ENCODE measurements at regions of chr6 and their contacts with region 1.

Region 1: GRCh38 chr6:44246663-44247337 is at the start of gene HSP90AB1:
- DNase-seq: peak; percentile 94 to 97
- H3K4me3 ChIP-seq: peak within 1 kb of the TSS; percentile 55 to 100 (median 98)
- H3K27ac ChIP-seq: peak within 1 kb of the TSS; percentile 95
- H3K4me1 ChIP-seq: peaks cover 7 to 18% (median 14%) of the 10 kb centered on the region in 4 experiments
- H3K27me3 ChIP-seq: no peaks in the 10 kb centered on the region
- CTCF ChIP-seq: no peak
- EP300 ChIP-seq: no peak
- POLR2A ChIP-seq: peak; percentile 99 to 100
- RAD21 ChIP-seq: no peak
- total RNA-seq, gene HSP90AB1: 2,224 and 2,297 TPM in 2 replicates

Region 2: GRCh38 chr6:44058617-44059358 is 188.0 kb before region 1 on chr6:
- CTCF ChIA-PET with region 1: no interaction called
- POLR2A ChIA-PET with region 1: no interaction called
- DNase-seq: no peak
- H3K4me3 ChIP-seq: no peak overlapping the region
- H3K27ac ChIP-seq: no peak overlapping the region
- H3K4me1 ChIP-seq: peaks cover 0 to 4% (median 0%) of the 10 kb centered on the region in 4 experiments; a peak in 4 of 7 replicates
- H3K27me3 ChIP-seq: no peaks in the 10 kb centered on the region
- CTCF ChIP-seq: no peak
- EP300 ChIP-seq: no peak
- POLR2A ChIP-seq: no peak
- RAD21 ChIP-seq: no peak

Region 3: DNA sequence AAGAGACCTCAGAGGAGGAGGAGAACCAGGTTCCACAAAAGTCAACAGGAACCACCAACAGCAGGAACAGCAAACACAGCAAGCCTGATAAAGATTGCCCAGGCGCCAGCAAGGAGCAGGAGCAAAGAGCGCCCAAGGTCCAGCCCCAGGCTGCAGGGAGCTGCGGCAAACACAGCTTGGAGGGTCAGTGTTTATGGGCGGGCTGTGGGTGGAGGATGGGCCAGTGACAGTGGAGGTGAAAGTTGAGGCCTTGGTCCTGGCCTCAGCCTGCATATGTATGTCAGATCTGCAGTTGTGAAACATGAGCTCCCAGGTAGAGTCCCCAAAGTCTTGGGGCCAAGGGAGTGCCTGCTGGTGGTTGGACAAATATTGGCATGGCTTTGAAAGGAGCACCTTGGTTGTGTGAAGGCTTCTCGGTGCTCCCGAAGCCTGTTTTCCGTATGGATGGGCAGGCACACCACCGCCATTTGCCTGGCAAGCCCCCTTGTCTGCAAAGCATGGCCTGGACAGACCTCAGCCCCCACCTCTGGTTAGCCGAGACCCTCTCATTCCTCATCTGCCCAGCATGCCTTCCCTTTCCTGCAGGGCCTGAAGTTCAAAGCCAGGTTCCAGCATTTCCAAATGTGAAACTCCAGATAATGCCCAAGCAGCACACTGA is 90.2 kb before region 1 on chr6:
- CTCF ChIA-PET with region 1: interaction called, 4 read pairs
- POLR2A ChIA-PET with region 1: interaction called, 55 read pairs
- DNase-seq: no peak
- H3K4me3 ChIP-seq: no peak overlapping the region
- H3K27ac ChIP-seq: no peak overlapping the region
- H3K4me1 ChIP-seq: peaks cover 0 to 12% (median 4%) of the 10 kb centered on the region in 4 experiments; a peak in 5 of 7 replicates
- H3K27me3 ChIP-seq: no peaks in the 10 kb centered on the region
- CTCF ChIP-seq: no peak
- EP300 ChIP-seq: no peak
- POLR2A ChIP-seq: no peak
- RAD21 ChIP-seq: no peak

Region 4: DNA sequence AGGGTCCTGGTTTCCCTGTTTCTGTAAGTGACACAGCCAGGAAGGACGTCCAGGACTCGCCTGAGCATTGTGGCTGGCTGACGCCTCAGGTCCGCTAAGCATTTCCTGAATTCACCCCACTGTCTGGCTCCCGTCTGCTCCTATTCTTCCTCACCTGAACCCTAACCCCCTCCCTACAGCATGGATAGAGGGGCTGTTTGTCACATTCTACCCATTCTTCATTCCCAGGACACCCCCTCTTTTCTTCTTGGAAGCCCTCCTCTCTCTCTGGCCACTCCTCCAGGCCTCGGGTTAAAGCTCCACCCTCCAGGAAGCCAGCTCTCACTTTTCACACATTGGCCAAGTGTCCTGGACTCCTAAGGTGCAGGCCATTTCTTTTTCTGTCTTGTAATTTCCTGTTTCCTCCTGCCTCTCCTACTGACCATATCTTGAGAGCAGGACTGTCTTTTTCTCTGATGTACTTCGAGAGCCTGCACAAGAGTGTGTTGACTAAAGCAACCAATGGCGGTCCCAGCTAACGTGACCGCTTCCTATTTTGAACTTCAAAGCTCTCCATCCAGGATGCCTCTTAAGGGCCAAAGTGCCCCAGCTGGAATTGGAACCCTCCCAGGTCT is 54.3 kb before region 1 on chr6:
- CTCF ChIA-PET with region 1: interaction called, 6 read pairs
- POLR2A ChIA-PET with region 1: interaction called, 26 read pairs
- DNase-seq: no peak
- H3K4me3 ChIP-seq: no peak overlapping the region
- H3K27ac ChIP-seq: no peak overlapping the region
- H3K4me1 ChIP-seq: peaks cover 4 to 8% (median 4%) of the 10 kb centered on the region in 4 experiments; a peak in 6 of 7 replicates
- H3K27me3 ChIP-seq: no peaks in the 10 kb centered on the region; a peak in 1 of 7 replicates
- CTCF ChIP-seq: no peak
- EP300 ChIP-seq: no peak
- POLR2A ChIP-seq: no peak
- RAD21 ChIP-seq: no peak

Region 5: DNA sequence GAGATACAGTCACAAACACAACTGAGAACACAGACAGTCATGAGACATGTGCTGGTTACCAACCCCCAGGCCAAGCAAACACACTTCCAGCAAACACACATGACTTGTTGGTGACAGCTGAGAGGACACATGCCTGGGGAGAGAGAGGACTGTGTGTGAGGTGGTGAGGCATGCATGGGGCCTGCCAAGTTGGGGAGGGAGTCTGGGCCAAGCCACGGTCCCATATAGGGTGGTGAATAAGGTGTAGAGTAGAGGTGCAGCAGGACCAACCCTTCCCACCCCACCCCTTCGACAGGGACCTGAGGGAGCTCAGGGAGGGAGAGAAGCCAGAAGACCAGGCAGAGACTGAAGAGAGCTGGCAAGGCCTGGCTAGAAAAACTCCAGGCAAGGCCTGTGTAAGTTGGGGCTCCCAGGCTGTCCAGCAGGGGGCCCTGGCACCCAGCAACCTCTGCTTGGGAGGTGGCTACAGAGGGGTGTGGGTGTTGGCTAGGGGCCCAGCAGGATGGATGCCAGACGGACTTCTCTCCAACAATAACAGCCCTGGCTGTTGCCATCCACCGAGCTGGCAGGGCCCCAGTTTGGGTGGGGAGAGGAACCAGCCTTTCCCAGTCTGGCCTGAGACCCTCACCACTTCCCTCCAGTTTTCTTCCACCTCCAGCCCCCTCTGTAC is 25.4 kb before region 1 on chr6:
- CTCF ChIA-PET with region 1: interaction called, 40 read pairs
- POLR2A ChIA-PET with region 1: interaction called, 477 read pairs
- DNase-seq: peak in 1 of 2 experiments; percentile 74
- H3K4me3 ChIP-seq: no peak overlapping the region; a peak in 1 of 8 replicates
- H3K27ac ChIP-seq: no peak overlapping the region
- H3K4me1 ChIP-seq: peaks cover 33 to 61% (median 45%) of the 10 kb centered on the region in 4 experiments
- H3K27me3 ChIP-seq: no peaks in the 10 kb centered on the region
- CTCF ChIP-seq: peak in 2 of 3 experiments; percentile 67 to 71; a peak in 3 of 4 replicates
- EP300 ChIP-seq: no peak
- POLR2A ChIP-seq: no peak
- RAD21 ChIP-seq: peak; percentile 28 to 60

Region 6: DNA sequence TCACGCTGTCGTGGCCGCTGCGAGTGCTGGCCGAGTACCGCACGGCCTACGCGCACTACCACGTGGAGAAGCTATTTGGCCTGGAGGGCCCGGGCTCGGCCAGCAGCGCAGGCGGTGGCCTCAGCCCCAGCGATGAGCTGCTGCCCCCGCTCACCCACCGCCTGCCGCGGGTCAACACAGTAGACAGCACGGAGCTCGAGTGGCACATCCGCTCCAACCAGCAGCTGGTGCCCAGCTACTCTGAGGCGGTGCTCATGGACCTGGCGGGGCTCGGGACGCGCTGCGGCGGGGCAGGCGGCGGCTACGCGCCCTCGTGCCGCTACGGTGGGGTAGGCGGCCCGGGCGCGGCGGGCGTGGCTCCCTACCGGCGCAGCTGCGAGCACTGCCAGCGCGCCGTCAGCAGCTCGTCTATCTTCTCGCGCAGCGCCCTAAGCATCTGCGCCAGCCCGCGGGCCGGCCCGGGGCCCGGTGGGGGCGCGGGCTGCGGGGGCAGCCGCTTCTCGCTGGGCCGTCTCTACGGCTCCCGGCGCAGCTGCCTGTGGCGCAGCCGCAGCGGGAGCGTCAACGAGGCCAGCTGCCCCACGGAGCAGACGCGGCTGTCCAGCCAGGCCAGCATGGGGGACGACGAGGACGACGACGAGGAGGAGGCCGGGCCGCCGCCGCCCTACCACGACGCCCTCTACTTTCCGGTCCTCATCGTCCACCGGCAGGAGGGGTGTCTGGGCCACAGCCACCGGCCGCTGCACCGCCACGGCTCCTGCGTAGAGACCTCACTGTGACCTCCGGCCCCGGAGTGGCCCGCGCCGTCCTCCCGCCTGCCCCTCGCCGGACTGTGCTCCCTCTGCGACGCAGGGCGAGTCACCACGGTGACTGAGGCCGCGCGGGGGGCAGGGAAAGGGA is 29.2 kb after region 1 on chr6:
- CTCF ChIA-PET with region 1: no interaction called
- POLR2A ChIA-PET with region 1: interaction called, 138 read pairs
- DNase-seq: no peak
- H3K4me3 ChIP-seq: no peak overlapping the region
- H3K27ac ChIP-seq: no peak overlapping the region
- H3K4me1 ChIP-seq: peaks cover 5 to 16% (median 9%) of the 10 kb centered on the region in 4 experiments
- H3K27me3 ChIP-seq: peaks cover 0 to 3% (median 0%) of the 10 kb centered on the region in 4 experiments; a peak in 1 of 7 replicates
- CTCF ChIP-seq: no peak
- EP300 ChIP-seq: no peak
- POLR2A ChIP-seq: no peak
- RAD21 ChIP-seq: no peak

Region 7: DNA sequence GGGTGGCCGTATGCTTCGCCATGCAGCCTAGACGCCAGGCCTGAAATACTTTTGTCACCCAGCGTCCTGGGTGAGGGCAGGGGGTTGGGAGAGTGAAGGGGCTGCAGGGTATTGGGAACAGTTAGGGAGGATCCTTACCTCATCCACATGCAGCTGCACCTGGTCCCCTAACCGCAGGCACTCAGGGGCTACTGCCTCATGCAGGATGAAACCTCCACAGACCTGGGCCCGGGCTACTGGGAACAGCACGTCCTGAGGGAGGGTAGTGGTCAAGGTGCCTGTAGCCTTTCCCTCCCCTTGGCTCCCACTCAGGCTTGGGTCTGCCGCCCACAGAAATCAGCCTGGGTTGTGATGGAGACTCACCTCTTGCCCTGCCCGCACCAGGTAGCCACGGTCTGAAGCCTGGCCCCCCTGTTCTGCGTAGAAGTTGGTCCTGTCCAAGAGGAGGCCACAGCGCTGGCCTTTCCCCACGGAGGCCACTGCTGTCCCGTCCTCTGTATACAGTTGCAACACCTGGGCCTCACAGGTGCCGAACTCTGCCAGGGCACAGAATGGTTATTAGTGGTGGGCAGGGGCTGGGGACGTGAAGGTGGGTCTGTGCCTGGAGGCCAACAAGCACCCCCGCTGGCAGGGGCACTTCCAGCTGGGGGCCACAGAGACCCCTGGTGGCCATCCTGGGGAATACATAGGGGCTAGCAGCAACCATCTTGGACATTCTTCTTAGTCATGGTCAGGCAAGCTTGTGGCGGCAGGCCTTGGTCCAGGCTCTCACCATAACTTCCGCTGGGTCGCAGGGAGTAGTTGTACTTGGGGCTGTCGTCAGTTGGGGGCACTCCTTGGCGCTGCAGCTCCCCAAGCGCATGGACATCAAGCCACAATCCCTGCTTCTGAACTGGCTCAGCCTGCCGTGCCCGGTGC is 57.7 kb after region 1 on chr6:
- CTCF ChIA-PET with region 1: interaction called, 5 read pairs
- POLR2A ChIA-PET with region 1: interaction called, 19 read pairs
- DNase-seq: peak in 1 of 2 experiments; percentile 80
- H3K4me3 ChIP-seq: no peak overlapping the region
- H3K27ac ChIP-seq: no peak overlapping the region
- H3K4me1 ChIP-seq: peaks cover 0 to 4% (median 0%) of the 10 kb centered on the region in 4 experiments; a peak in 1 of 7 replicates
- H3K27me3 ChIP-seq: no peaks in the 10 kb centered on the region
- CTCF ChIP-seq: peak in 2 of 3 experiments; percentile 88 to 95; a peak in 3 of 4 replicates
- EP300 ChIP-seq: no peak
- POLR2A ChIP-seq: no peak
- RAD21 ChIP-seq: peak; percentile 72 to 77

Region 8: GRCh38 chr6:44387346-44388133 is 140.7 kb after region 1 on chr6 and contains the start of gene CDC5L:
- CTCF ChIA-PET with region 1: no interaction called
- POLR2A ChIA-PET with region 1: interaction called, 13 read pairs
- DNase-seq: peak; percentile 85 to 88
- H3K4me3 ChIP-seq: peak within 1 kb of the TSS; percentile 72 to 96 (median 86)
- H3K27ac ChIP-seq: peak within 1 kb of the TSS; percentile 93
- H3K4me1 ChIP-seq: peaks cover 0 to 7% (median 1%) of the 10 kb centered on the region in 4 experiments; a peak in 3 of 7 replicates
- H3K27me3 ChIP-seq: no peaks in the 10 kb centered on the region
- CTCF ChIP-seq: no peak
- EP300 ChIP-seq: no peak
- POLR2A ChIP-seq: peak; percentile 72 to 86; a peak in 2 of 3 replicates
- RAD21 ChIP-seq: no peak
- total RNA-seq, gene CDC5L: 31.9 and 32.8 TPM in 2 replicates